ENCODE measurements at regions of chr2 and their contacts with region 1.

Region 1: DNA sequence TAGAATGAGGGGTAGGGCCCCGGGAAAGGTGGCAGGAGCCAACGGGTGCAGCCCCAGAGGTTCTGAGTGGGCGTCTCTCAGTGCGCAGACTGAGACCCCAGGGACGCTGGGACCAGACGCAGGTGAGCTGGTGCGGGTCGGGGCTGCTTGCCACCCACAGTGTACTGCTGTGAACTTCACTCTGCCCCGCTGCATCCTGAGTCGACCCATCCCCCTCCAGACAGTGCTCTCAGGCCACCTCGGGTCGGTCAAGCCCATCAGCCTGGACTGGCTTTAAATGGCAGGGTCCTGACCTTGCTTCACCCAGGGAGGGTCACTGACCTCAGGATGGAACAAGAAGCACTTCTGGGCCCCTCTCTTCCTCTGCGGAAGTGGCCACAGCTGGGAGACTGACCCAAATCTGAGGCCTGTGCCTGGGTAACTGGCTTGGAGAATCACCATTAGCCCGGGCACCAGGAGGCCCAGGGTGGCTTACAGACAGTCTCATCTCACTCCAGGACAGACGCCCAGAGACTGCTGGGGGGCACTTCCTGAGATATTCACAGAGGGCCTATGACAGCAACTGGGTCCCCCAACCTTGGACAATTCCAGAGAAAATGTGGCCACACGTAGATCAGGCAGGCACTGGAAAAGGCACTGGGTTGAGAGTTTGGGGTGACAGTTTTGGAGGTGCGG is 23.7 kb upstream of the BOK start:
- DNase-seq: no peak
- ATAC-seq: peak; percentile 54
- H3K4me3 ChIP-seq: peak overlapping the region in 1 of 3 experiments; percentile 54; a peak in 2 of 6 replicates
- H3K27ac ChIP-seq: no peak overlapping the region
- H3K4me1 ChIP-seq: peaks cover 90% of the 10 kb centered on the region
- H3K27me3 ChIP-seq: peaks cover 2 to 37% of the 10 kb centered on the region in 2 experiments; a peak in 4 of 5 replicates
- CTCF ChIP-seq: no peak
- EP300 ChIP-seq: peak in 1 of 2 experiments; percentile 49; a peak in 1 of 4 replicates
- POLR2A ChIP-seq: no peak
- RAD21 ChIP-seq: no peak

Region 2: GRCh38 chr2:241514986-241515737 is 19.7 kb before region 1 on chr2:
- CTCF ChIA-PET with region 1: no interaction called
- POLR2A ChIA-PET with region 1: interaction called, 11 read pairs
- in situ Hi-C with region 1: no loop called
- intact Hi-C with region 1: no loop called
- DNase-seq: no peak
- ATAC-seq: peak; percentile 11; the same call in 2 of the 3 replicates
- H3K4me3 ChIP-seq: no peak overlapping the region
- H3K27ac ChIP-seq: peak overlapping the region; percentile 28
- H3K4me1 ChIP-seq: peaks cover 57% of the 10 kb centered on the region
- H3K27me3 ChIP-seq: no peaks in the 10 kb centered on the region; a peak in 2 of 5 replicates
- CTCF ChIP-seq: no peak
- EP300 ChIP-seq: no peak
- POLR2A ChIP-seq: no peak
- RAD21 ChIP-seq: no peak